AG04449 (cell line): ENCODE measurements at regions of chr1 and their contacts with region 1.

Region 1: GRCh38 chr1:9181176-9181906 is 52.4 kb upstream of the GPR157 start:
- DNase-seq: no peak
- H3K4me3 ChIP-seq: peak overlapping the region; percentile 87
- CTCF ChIP-seq: peak; percentile 99

Region 2: GRCh38 chr1:9166289-9167235 is 14.8 kb before region 1 on chr1:
- CTCF ChIA-PET with region 1: interaction called, 31 read pairs
- POLR2A ChIA-PET with region 1: interaction called, 3 read pairs
- DNase-seq: peak; percentile 38
- H3K4me3 ChIP-seq: peak overlapping the region; percentile 18; the same call in 1 of the 2 replicates
- CTCF ChIP-seq: no peak

Region 3: DNA sequence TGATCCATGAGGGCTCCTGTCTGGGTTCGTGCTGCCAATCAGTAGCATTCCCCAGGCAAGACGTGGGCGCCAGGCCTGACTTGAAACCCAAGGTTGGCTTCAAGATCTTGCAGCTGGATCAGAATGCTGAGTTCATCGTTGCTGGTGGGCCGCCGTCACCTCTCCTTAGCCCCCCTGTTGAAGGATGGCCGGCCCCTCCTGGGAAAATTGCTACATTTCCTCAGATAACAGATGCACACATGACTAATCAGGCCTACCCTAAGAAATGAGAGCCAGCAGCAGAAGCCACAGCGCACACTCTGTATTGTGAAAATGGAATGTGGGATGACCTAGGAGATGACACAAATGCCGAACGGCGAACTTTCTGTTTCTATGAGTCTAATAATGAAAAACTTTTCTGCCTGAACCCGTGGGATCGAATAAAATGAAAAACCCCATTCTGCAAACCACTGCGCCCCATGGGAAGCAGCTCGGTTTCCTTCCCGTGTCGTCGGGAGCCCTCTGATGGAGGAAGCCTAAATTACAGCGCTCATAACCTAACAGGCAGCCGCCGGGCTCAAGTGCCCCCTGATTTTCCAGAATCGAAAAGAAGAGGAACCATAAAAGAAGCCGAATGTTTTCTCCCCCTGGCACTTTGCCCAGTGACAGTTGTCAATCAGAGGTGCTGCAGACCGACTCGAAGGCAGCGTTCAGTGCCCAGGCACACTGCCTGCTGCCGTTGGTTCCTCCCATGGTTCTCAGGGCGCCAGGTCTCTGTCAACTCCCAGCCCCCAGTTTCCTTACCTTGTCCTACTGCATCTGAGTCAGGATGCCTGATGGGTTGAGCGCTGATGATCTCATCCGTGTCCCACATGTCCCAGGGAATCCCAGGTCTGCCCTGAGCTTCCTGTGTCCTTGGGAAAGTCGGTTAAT is 15.0 kb after region 1 on chr1:
- CTCF ChIA-PET with region 1: interaction called, 35 read pairs
- POLR2A ChIA-PET with region 1: no interaction called
- DNase-seq: no peak
- H3K4me3 ChIP-seq: peak overlapping the region; percentile 12
- CTCF ChIP-seq: peak; percentile 69

Region 4: GRCh38 chr1:9201401-9202239 is 20.3 kb after region 1 on chr1:
- CTCF ChIA-PET with region 1: interaction called, 35 read pairs
- POLR2A ChIA-PET with region 1: no interaction called
- DNase-seq: no peak
- H3K4me3 ChIP-seq: peak overlapping the region; percentile 66
- CTCF ChIP-seq: no peak

Region 5: DNA sequence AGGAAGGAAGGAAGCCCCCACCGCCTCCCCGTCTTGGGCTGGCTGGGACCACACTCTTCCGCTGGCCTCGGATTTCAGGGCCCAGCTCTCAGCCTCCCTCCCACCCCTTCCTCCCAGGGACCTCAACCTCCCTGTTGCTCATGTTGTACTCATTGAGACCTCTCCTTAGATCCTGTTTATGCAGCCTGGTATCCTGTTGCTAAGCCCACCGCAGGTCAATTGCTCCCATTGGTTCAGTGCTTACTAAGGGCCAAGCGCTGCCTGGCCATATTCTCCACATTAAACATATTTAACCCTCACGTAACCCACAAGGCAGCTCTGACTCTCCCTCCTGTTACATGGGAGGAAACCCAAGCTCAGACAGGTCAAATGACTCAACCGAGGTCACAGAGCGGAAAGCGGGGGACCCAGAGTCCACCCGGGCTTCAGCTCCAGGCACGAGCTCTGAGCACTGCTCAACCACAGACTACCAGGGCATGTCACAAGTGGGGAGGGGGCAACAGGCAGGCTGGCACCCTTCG is 30.0 kb after region 1 on chr1:
- CTCF ChIA-PET with region 1: interaction called, 15 read pairs
- POLR2A ChIA-PET with region 1: no interaction called
- DNase-seq: no peak
- H3K4me3 ChIP-seq: no peak overlapping the region
- CTCF ChIP-seq: no peak